ENCODE measurements at regions of chr5 and their contacts with region 1.

Region 1: GRCh38 chr5:142699184-142699720 is 13.4 kb upstream of the FGF1 start:
- DNase-seq: peak; percentile 80 to 97 (median 86)
- H3K4me3 ChIP-seq: no peak overlapping the region
- H3K27ac ChIP-seq: peak overlapping the region in 2 of 5 donors; percentile 21 to 62
- H3K4me1 ChIP-seq: peaks cover 0 to 17% of the 10 kb centered on the region in 2 donors
- H3K27me3 ChIP-seq: no peaks in the 10 kb centered on the region
- CTCF ChIP-seq: peak; percentile 93 to 98 (median 96)
- POLR2A ChIP-seq: no peak

Region 2: GRCh38 chr5:142151436-142152383 is 547.5 kb before region 1 on chr5:
- intact Hi-C with region 1: loop called in 1 of 2 experiments (anchors 10 kb)
- DNase-seq: peak; percentile 49 to 87 (median 56)
- H3K4me3 ChIP-seq: no peak overlapping the region
- H3K27ac ChIP-seq: no peak overlapping the region
- H3K4me1 ChIP-seq: peaks cover 0 to 2% of the 10 kb centered on the region in 2 donors
- H3K27me3 ChIP-seq: no peaks in the 10 kb centered on the region
- CTCF ChIP-seq: peak; percentile 69 to 89 (median 84)
- POLR2A ChIP-seq: no peak

Region 3: DNA sequence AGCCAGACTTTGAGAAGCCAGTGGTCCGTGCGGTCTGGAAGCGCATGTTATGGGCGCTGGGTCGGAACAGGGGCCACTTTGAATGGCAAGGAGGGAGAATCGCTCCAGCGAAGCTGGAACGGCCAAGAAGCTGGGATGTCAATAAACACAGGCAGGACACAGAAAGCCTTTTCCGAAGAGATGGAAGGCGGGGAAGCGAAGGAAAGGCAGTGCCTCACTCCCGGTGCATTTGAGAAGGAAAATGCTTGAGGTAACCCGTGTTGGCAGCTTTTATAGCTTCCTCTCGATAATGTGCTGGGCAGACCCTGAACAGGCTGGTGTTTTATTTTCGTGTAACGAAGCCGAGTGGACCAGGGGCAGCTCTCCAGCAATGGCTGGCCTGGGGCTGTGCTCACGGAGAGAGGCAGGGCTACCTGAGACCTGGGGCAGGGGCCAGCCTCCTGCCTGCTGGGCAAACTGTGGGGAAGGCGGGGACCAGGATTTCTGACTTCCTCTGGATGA is 290.2 kb before region 1 on chr5:
- intact Hi-C with region 1: no loop called
- DNase-seq: no peak
- H3K4me3 ChIP-seq: no peak overlapping the region
- H3K27ac ChIP-seq: no peak overlapping the region
- H3K4me1 ChIP-seq: no peaks in the 10 kb centered on the region
- H3K27me3 ChIP-seq: no peaks in the 10 kb centered on the region
- CTCF ChIP-seq: no peak
- POLR2A ChIP-seq: no peak

Region 4: DNA sequence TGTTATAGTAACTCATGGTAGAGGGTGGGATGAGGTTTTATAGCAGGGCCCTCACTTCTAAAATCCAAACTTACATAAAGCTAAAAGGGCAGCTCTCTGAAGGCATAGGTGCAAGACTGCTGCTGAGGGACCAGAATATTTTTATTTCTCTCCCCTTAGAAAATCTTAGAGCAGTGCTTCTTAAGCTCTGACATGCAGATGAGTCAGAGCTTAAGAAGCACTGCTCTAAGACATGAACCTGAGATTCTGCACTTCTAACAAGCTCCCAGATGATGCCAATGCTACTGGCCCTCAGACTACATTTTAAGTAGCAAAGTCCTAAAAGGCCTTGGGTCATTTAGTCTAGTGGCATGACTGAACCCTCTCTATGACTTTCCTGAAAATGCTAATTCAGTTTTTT is 276.8 kb before region 1 on chr5:
- intact Hi-C with region 1: no loop called
- DNase-seq: no peak
- H3K4me3 ChIP-seq: no peak overlapping the region
- H3K27ac ChIP-seq: no peak overlapping the region
- H3K4me1 ChIP-seq: peaks cover 0 to 9% of the 10 kb centered on the region in 2 donors
- H3K27me3 ChIP-seq: no peaks in the 10 kb centered on the region
- CTCF ChIP-seq: no peak
- POLR2A ChIP-seq: no peak

Region 5: GRCh38 chr5:142605611-142606010 is 93.6 kb before region 1 on chr5:
- intact Hi-C with region 1: loop called (anchors 5 kb)
- DNase-seq: no peak
- H3K4me3 ChIP-seq: no peak overlapping the region
- H3K27ac ChIP-seq: no peak overlapping the region
- H3K4me1 ChIP-seq: peaks cover under 1 to 6% of the 10 kb centered on the region in 2 donors
- H3K27me3 ChIP-seq: peaks cover 8% of the 10 kb centered on the region
- CTCF ChIP-seq: no peak
- POLR2A ChIP-seq: no peak

Region 6: DNA sequence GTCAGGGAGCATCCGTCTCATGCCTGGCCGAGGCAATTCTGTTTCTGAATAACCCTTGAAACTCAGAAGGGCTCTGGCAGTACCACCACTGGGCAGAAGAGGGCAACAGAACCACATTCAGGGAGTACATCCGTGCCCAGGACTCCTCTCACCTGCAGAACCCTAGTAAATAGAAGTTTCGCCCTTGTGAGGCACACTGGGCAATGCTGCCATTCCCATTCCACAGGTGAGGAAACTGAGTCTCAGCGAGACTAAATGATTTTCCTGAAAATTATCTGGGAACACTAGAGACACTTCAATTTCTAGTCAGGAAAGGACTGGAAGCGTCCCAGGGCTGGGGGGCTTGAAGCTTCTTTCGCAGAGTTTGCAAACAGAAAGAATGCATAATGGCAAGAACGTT is 88.1 kb before region 1 on chr5:
- intact Hi-C with region 1: loop called (anchors 5 kb)
- DNase-seq: peak; percentile 73 to 95 (median 78)
- H3K4me3 ChIP-seq: no peak overlapping the region
- H3K27ac ChIP-seq: no peak overlapping the region
- H3K4me1 ChIP-seq: no peaks in the 10 kb centered on the region
- H3K27me3 ChIP-seq: peaks cover 4% of the 10 kb centered on the region
- CTCF ChIP-seq: peak; percentile 75 to 96 (median 94)
- POLR2A ChIP-seq: no peak

Region 7: DNA sequence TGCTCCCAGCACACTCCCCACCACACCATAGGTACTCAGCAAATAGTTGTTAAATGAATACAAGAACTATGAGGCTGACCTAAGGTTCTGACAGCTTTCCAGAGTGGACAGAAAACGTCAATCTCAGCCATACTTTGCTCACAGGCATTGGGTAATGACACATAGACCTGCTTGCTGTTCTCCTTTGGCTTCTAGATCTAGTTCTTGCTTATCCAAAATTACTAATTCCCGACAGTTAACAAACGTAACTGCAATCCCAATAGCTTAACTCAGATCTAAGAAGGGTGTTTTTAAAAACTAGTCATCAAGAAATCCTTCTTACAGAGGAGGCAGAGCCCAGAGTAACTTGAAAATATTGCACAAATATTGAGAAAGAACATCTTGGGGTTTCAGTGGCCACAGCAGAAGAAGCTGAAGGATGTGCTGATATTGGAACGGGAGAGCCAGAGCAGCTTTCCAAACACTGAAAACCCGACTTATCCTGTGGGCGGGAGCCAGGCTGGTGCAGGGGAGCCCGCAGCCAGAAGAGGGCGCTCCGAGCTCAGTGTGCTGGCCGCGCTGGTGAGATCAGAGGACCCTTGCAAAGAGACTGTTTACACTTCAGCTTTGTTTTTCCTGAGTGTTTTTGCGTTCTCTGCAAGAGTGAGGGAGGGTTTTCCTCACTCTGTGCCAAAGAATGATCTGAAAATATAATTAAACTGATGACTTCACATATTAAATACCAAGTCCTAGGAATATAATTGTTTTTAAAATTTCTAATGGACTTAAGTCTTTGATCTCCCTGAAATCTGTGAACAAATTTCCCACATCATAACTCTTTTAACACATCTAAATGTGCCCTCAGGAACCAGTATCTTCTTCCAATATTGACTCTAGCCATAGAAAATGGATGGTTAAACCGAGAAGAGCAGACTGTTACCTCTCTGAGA is 43.6 kb before region 1 on chr5:
- intact Hi-C with region 1: loop called (anchors 5 kb)
- DNase-seq: peak; percentile 71 to 93 (median 83)
- H3K4me3 ChIP-seq: no peak overlapping the region
- H3K27ac ChIP-seq: peak overlapping the region in 2 of 5 donors; percentile 13 to 65
- H3K4me1 ChIP-seq: peaks cover 0 to 14% of the 10 kb centered on the region in 2 donors
- H3K27me3 ChIP-seq: peaks cover 5% of the 10 kb centered on the region
- CTCF ChIP-seq: peak; percentile 83 to 98 (median 94)
- POLR2A ChIP-seq: no peak